ENCODE measurements at regions of chr6 and their contacts with region 1.

Region 1: GRCh38 chr6:73129653-73130443 is 95.4 kb downstream of the KHDC1L start:
- DNase-seq: peak; percentile 88 to 95
- ATAC-seq: peak; percentile 92
- H3K4me3 ChIP-seq: no peak overlapping the region
- H3K27ac ChIP-seq: no peak overlapping the region
- H3K4me1 ChIP-seq: no peaks in the 10 kb centered on the region
- H3K27me3 ChIP-seq: no peaks in the 10 kb centered on the region

Region 2: GRCh38 chr6:72411872-72412708 is 717.8 kb before region 1 on chr6:
- intact Hi-C with region 1: loop called (anchors 1 to 5 kb)
- DNase-seq: peak; percentile 54 to 85
- ATAC-seq: peak; percentile 92
- H3K4me3 ChIP-seq: no peak overlapping the region
- H3K27ac ChIP-seq: no peak overlapping the region
- H3K4me1 ChIP-seq: no peaks in the 10 kb centered on the region
- H3K27me3 ChIP-seq: no peaks in the 10 kb centered on the region

Region 3: DNA sequence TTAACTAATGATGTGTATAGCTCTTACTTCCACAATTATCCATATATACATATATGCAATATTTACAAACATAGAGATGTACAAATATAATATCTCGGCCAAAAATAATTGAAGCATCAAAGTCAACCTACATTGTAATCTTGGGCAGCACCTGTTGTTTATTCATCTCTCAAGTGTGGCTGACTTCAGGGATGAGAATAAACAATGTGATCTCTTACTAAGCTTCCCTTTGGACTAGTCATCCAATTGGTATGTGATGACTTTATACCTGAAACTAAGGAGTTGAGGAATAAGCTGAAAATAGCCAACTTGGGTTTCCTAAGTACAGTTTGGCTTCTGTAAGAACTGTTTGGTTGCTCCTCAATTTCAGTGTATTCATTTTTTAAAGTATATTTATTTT is 161.1 kb before region 1 on chr6:
- intact Hi-C with region 1: loop called in 1 of 2 experiments (anchors 10 kb)
- DNase-seq: no peak
- ATAC-seq: no peak
- H3K4me3 ChIP-seq: no peak overlapping the region
- H3K27ac ChIP-seq: no peak overlapping the region
- H3K4me1 ChIP-seq: peaks cover 0 to 4% of the 10 kb centered on the region in 2 donors
- H3K27me3 ChIP-seq: no peaks in the 10 kb centered on the region

Region 4: DNA sequence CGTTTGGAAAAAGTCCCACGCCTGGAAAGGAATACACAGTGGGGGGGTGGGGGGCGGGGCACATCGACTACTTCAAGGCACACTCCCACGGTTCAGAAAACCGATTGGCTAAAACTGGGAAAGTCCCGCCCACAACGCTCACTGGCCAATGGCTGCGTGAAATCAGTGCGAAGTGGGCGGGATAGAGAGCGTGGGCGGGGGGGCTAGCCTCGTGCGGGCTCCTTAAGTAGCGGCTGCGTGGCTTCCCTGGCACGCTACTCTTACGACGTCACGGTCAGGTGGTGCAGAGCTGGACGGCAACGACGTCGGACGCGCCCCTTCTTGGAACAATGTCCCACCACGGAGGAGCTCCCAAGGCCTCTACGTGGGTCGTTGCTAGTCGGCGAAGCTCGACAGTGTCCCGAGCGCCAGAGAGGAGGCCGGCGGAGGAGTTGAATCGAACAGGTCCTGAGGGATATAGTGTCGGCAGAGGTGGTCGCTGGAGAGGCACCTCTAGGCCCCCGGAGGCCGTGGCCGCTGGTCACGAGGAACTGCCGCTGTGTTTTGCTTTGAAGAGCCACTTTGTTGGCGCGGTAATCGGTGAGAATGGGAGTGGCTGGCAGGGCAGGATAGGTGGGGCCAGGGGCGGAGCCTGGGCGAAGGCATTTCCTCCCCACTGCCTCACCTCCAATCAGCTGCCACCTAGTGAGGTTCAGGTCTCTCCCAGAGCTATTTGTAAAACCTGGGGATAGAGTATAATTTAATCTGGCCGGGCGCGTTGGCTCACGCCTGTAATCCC is 264.9 kb after region 1 on chr6 and contains the start of gene DDX43:
- intact Hi-C with region 1: no loop called
- DNase-seq: peak; percentile 69 to 78
- ATAC-seq: peak; percentile 63
- H3K4me3 ChIP-seq: no peak within 1 kb of the TSS
- H3K27ac ChIP-seq: no peak within 1 kb of the TSS
- H3K4me1 ChIP-seq: no peaks in the 10 kb centered on the region
- H3K27me3 ChIP-seq: no peaks in the 10 kb centered on the region
- total RNA-seq, gene DDX43: 0.71 to 0.78 TPM

Region 5: DNA sequence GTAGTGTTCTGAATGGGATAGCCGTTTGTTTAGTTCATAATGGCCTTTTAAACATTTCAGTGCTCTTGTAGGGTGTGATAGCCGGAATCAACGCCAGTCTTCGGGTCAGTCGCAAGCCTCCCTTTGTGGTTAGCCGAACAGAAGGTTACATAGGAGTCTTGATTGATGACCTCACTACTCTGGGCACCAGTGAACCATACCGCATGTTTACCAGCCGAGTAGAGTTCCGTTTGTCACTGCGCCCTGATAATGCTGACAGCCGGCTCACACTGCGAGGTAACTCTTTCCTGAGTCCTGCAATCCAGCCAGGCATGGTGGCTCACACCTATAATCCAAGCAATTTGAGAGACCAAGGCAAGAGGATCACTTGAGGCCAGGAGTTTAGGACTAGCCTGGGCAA is 352.1 kb after region 1 on chr6:
- intact Hi-C with region 1: no loop called
- DNase-seq: no peak
- ATAC-seq: no peak
- H3K4me3 ChIP-seq: no peak overlapping the region
- H3K27ac ChIP-seq: no peak overlapping the region
- H3K4me1 ChIP-seq: no peaks in the 10 kb centered on the region
- H3K27me3 ChIP-seq: no peaks in the 10 kb centered on the region

Measured in aorta (tissue), 5 donors.